Panc1 (cell line): ENCODE measurements at regions of chr1 and their contacts with region 1.

Region 1: DNA sequence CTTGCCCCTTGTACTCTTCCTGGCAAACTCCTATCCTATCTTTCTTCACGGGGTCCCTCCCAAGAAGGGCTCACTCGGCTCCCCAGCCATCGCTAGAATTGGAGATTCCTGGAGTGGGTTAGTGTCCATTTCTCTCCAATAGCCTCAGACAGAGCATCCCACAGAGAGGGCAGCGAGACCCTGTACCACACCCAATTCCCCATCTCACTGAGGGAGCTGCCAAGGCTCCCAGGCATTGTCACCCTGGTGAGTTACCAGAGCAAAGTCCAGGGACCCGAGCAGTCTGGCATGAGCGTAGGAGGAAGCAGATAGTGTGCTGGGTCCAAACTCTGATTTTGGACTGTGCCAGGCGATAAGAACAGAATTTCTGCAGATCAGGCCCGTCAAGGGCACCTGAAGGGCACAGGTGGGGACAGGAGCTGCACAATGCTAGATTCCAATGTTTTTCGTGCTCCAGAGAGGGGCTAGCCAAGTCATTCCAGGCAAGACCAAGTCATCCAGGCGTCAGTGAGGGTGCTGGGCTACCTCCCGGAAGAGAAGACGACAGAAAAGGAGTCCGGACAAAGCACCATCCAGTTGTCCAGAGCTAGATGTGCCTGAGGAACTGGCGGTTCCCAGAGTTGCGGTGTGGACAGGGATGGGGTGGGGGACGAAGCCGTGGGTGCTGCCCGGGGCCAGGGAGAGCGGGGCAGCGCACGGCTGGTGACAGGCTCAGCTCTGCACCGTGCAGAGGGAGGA is 15.3 kb downstream of the AKR7A3 start:
- DNase-seq: no peak
- ATAC-seq: no peak
- H3K4me3 ChIP-seq: no peak overlapping the region
- H3K27ac ChIP-seq: no peak overlapping the region
- H3K4me1 ChIP-seq: no peaks in the 10 kb centered on the region
- H3K27me3 ChIP-seq: no peaks in the 10 kb centered on the region
- CTCF ChIP-seq: no peak

Region 2: GRCh38 chr1:19251305-19252196 is 21.7 kb before region 1 on chr1 and contains the starts of genes EMC1 and MRTO4:
- CTCF ChIA-PET with region 1: no interaction called
- POLR2A ChIA-PET with region 1: interaction called, 17 read pairs
- in situ Hi-C with region 1: no loop called
- intact Hi-C with region 1: no loop called
- DNase-seq: peak; percentile 47
- ATAC-seq: peak; percentile 95
- H3K4me3 ChIP-seq: peak within 1 kb of the TSS; percentile 58 to 92
- H3K27ac ChIP-seq: peak within 1 kb of the TSS; percentile 96
- H3K4me1 ChIP-seq: peaks cover 26% of the 10 kb centered on the region
- H3K27me3 ChIP-seq: no peaks in the 10 kb centered on the region
- CTCF ChIP-seq: no peak
- total RNA-seq, gene EMC1: 103 TPM
- total RNA-seq, gene MRTO4: 90.1 TPM

Region 3: GRCh38 chr1:19287436-19288185 is 14.3 kb after region 1 on chr1:
- CTCF ChIA-PET with region 1: no interaction called
- POLR2A ChIA-PET with region 1: no interaction called
- in situ Hi-C with region 1: no loop called
- intact Hi-C with region 1: no loop called
- DNase-seq: no peak
- ATAC-seq: peak; percentile 11; the same call in 1 of the 2 replicates
- H3K4me3 ChIP-seq: no peak overlapping the region
- H3K27ac ChIP-seq: no peak overlapping the region
- H3K4me1 ChIP-seq: peaks cover 5% of the 10 kb centered on the region; the same call in 1 of the 2 replicates
- H3K27me3 ChIP-seq: no peaks in the 10 kb centered on the region
- CTCF ChIP-seq: no peak